Common myeloid progenitor, CD34-positive (primary cell): ENCODE measurements at regions of chr10 and their contacts with region 1.

Region 1: DNA sequence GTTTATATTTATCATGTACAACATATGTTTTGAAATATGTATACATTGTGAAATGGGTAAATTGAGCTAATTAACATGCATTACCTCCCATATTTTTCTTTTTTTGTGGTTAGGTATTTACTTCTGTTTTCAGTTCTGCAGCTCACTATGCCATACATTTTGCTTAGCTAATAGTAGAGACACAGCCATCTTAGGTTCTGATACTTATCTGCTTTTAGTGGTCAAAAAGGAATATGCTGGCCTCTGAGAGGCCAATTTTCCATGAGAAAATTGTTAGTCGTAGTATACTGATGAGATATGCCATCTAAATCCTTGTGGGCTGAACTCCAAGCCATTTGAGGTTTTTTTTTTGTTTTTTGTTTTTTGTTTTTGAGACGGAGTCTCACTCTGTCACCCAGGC is 31.0 kb downstream of the SGPL1 start:
- DNase-seq: no peak
- H3K4me3 ChIP-seq: no peak overlapping the region
- H3K27ac ChIP-seq: no peak overlapping the region
- H3K4me1 ChIP-seq: no peaks in the 10 kb centered on the region
- H3K27me3 ChIP-seq: no peaks in the 10 kb centered on the region

Region 2: DNA sequence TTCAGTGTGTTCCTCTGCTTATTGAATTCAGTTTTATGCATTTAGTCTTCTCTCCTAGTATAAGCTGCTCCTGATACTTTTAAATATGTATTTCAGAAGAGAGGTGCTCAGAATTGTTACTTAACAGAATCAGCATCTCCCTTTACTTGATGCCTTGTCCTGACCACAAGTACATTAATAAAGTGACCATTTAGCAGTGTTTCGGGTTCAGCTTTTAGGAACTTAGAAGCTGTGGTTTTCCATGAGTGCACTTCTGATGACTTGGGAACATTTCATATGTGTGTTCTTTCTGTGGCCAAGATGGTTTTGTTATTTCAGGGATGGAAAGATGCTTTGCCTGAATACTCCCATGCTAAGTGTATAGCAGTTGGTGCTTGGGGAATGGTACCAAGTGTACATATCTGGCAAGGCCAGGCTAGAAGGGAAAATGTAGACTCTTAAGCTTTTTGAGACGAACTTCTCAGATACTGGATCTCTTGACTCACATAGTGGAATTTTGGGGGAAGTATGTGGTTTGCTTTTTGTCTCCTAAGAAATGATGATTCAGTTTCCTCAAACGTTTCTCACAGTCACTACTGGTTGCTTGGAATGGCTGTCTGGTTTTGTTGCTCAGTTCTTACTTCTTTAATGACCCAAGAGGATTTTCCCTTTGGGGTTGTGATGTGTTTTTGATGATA is 13.8 kb before region 1 on chr10:
- CTCF ChIA-PET with region 1: interaction called, 11 read pairs
- POLR2A ChIA-PET with region 1: no interaction called
- DNase-seq: peak; percentile 45 to 70 (median 59)
- H3K4me3 ChIP-seq: peak overlapping the region in 1 of 7 experiments; percentile 17
- H3K27ac ChIP-seq: no peak overlapping the region
- H3K4me1 ChIP-seq: peaks cover 5 to 28% (median 15%) of the 10 kb centered on the region in 4 experiments
- H3K27me3 ChIP-seq: no peaks in the 10 kb centered on the region

Region 3: DNA sequence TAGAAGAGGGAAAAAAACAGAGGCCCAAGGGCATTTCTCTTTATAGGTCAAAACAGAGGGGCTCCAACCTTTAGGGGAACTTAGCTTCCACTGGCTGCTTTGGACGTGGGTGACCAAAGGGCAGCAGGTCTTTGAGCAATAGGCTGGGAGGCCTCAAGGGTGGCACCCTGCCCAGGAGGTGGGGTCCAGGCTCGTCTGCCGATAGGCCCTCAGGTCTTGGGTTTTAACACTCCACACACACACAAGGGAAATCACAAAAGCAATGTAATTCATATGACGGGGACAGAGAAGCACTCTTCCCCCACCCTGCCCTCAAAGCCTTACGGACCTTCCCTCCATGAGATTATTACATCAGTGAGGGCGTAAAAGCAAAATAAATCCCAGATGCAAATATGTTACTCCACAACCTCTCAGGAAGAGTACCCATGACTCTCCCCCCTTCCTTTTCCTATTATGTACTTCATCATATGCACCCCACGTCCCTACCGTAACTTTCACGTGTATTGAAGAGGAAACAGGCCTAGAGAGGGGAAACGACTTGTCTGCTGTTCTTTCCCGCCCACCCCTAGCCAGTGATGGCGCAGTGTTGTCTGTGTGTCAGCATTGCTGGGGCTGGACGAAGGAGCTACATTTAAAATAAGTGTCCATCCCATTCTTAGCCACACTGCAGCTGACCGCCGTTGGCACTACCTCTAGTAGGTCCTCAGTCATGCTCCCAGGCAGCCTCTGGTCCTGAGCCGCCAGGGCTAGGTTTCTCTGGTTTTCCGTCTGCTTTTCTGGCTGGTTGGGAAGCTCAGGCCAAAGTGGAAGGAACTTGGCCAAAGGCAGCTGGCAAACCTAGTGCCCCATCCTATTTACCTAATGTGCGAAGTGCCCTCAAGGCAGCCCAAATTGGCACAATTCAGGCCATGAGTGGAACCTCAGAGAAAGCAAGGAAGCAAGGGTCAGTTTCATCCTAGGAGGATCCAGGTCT is 39.4 kb after region 1 on chr10:
- CTCF ChIA-PET with region 1: no interaction called
- POLR2A ChIA-PET with region 1: no interaction called
- DNase-seq: peak in 2 of 3 donors; percentile 21 to 24
- H3K4me3 ChIP-seq: no peak overlapping the region
- H3K27ac ChIP-seq: peak overlapping the region in 1 of 2 experiments; percentile 12
- H3K4me1 ChIP-seq: peaks cover 0 to 30% (median 23%) of the 10 kb centered on the region in 4 experiments
- H3K27me3 ChIP-seq: no peaks in the 10 kb centered on the region

Region 4: DNA sequence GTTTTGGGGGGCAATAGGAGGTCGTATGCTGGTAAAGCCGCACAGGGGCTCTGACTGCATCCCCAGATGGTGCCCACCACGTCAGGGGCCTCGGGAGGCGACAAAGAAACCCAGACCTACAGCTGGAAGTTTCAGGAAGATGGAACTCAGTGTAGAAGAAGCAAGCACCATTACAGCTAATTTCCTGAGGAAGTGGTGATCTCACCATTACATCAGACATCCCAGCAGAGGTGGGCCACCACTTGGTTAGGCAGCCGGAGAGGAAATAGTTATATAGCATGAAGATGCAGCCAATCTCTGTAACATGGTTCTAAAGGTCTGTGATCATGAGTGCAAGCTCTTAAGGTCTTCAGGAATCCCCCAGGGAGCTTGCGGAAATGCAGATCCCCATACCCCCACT is 168.9 kb after region 1 on chr10:
- CTCF ChIA-PET with region 1: no interaction called
- POLR2A ChIA-PET with region 1: no interaction called
- DNase-seq: peak; percentile 6 to 21 (median 15)
- H3K4me3 ChIP-seq: no peak overlapping the region
- H3K27ac ChIP-seq: no peak overlapping the region
- H3K4me1 ChIP-seq: peaks cover 0 to 4% (median 0%) of the 10 kb centered on the region in 4 experiments
- H3K27me3 ChIP-seq: no peaks in the 10 kb centered on the region